ENCODE measurements at regions of chr2 and their contacts with region 1.

Region 1: DNA sequence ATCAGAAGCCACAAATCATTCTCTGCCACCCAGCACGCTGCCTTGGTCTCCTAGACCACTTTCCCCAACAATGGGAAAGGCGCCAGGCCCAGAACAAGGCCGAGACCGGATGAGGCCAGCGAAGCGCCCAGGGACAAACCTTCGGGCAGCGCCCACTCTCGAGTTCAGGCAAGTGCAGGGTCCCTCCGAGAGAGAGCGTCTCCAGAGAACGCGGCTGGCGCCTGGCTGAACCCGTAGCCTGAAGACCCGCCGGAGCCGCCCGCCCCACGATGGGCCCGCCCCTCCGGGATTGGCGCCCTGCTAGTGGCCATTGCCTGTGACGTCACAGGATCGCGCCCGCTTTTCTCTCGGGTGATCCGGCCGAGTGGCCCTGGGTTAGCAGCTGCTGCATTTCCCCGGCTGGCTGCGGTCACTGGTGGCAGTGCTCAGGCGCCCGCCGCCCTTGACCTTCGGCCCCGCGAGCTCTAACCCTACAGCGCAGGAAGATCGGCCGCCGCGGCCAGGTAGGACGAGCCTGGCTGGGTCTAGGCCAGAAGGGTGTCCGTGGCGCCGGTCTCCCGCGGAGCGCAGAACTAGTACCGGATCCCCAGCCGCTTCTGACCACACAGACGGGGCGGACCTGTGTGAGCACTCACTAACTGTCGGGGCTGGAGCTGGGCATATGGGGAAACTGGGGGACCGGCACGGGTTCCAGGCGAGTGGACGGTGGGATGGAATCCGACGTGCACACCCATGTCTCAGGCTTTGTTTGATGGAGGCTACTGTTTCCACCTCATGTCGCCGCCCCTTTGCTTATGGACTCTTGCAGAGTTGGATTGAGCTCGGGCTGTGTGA is at the start of gene FAHD2A:
- DNase-seq: peak; percentile 98
- ATAC-seq: peak; percentile 95
- H3K4me3 Mint-ChIP-seq: peak within 1 kb of the TSS; percentile 91
- H3K27ac Mint-ChIP-seq: peak within 1 kb of the TSS; percentile 95
- H3K4me1 Mint-ChIP-seq: peaks cover 16% of the 10 kb centered on the region
- H3K27me3 Mint-ChIP-seq: no peaks in the 10 kb centered on the region
- total RNA-seq, gene FAHD2A: 37.9 to 41.2 TPM

Region 2: DNA sequence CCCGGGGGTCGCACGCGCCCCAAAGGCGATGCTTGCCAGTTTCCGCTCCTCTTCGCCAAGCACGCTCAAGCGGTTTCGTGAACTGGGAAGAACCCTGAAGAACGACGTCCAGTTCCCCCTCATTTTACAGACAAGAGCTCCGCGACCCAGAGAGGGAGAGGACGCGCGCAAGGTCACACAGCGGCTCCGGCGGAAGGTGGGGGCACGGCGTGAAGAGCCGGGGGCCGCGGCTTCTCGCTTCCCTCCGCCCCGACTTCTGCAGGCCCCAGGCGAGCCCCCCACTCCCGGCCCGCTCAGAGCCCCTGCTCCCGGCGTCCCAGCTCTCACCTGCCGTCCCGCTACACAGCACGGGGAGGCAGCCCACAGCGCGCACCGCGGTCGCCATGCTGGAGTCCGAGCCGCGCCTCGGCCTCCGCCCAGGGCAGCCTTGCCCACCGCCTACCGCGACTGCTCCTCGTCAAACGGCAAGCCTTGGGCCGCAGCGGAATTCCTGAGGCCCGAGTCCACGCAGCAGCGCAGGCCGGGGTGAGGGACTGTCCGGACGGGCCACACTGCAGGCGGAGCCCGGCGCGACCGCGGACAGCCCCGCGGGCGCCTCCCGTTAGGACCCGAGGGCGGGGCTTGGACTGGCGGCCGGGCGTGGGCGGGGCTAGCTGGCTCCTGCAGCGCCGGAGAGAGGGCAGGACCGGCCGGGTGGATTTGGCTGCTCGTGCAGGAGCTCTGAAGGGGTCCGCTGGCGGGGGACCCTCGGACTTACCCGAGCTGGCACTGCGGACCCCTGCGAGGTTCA is 281.0 kb before region 1 on chr2 and contains the start of gene MRPS5:
- CTCF ChIA-PET with region 1: no interaction called
- POLR2A ChIA-PET with region 1: no interaction called
- intact Hi-C with region 1: loop called in 1 of 2 experiments (anchors 2 kb)
- DNase-seq: peak; percentile 93
- ATAC-seq: peak; percentile 89
- H3K4me3 Mint-ChIP-seq: peak within 1 kb of the TSS; percentile 97
- H3K27ac Mint-ChIP-seq: peak within 1 kb of the TSS; percentile 94
- H3K4me1 Mint-ChIP-seq: peaks cover 37% of the 10 kb centered on the region
- H3K27me3 Mint-ChIP-seq: no peaks in the 10 kb centered on the region
- total RNA-seq, gene MRPS5: 90.7 to 97.1 TPM

Region 3: DNA sequence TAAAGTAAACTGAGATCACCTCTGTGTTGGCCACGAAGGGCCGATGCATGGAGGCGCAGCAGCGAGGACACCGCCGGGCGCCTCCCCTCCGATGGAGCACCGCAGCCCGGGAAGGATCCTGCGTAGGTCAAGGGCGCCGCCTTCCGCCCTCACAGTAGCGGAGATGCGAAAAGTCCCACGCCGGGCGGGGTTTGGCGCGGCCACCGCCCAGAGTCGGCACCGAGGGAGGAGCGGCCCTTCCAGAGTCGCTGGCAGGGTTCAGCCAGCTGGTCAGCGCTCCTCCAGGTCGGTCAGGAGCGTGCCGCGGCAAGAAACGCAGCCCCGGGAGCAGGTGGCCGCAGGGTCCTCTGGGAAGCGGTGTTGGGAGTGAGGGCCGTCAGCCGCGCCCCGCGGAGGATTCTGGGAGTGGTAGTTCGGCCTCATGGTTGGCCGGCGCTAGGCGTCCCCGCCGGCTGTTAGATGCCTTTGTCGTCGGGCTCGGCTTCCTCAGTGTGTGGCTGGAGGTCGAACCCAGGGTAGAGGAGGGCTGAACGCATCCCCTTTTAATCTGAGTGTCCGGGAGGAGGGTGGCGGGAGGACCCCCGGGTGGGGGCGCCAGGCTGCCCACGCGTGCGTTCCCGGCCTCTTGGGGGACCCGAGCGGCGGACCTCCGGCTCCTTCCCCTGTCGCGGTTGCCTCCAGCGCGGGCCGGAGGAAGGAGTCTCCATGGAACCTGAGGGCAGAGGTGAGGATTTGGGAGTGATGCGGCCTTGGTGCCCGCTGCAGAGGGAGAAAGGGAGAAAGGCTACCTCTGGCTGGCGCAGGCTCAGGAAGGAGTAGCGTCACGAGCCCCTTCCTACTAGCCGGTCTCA is 195.3 kb before region 1 on chr2 and contains the start of gene ZNF892:
- CTCF ChIA-PET with region 1: no interaction called
- POLR2A ChIA-PET with region 1: no interaction called
- intact Hi-C with region 1: loop called in 1 of 2 experiments (anchors 2 kb)
- DNase-seq: peak; percentile 91
- ATAC-seq: peak; percentile 98
- H3K4me3 Mint-ChIP-seq: peak within 1 kb of the TSS; percentile 87
- H3K27ac Mint-ChIP-seq: peak within 1 kb of the TSS; percentile 68
- H3K4me1 Mint-ChIP-seq: peaks cover 17% of the 10 kb centered on the region
- H3K27me3 Mint-ChIP-seq: no peaks in the 10 kb centered on the region
- total RNA-seq, gene ZNF892: 3.2 to 3.8 TPM

Region 4: DNA sequence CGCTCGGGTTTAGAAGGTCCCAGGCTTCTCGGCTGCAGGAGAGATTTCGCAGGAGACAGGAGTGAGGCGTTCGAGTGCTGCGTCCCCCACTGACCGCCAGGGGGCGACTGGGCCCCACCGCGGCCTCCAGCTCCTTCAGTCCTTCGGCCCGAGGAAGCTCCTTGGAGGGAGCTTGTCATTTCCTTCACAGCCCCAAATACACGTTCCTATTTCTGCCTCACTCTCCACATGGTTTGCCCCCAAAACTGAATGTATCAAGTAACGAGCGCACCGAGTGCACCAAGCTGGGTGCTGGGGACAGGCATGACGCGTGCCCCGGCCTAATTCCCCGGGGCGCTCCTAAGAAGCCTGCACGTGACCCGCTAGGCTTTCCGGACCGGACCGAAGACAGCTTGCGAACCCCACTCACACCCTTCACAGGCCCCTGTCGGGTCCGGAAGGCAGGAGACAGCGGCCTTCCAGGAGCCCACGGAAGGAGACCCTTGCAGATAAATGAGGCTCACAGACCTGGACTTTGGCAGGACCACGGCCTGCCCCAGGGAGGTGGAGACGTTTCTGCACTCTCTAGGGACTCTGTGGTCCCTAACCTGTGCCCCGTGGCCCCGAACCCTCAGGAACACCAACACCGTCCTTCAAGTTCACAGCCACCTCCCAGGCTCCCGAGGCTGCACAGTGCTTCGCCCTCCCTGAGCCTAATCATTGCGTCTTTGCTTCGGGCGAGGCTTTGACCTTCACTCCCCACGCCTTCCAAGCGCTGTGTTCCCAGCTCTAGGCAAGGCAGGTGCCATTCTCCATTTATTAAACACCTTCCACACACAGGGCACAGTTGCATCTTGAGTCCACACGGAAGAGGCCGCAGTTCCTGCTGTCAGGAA is 13.1 kb before region 1 on chr2:
- CTCF ChIA-PET with region 1: interaction called, 15 read pairs
- POLR2A ChIA-PET with region 1: no interaction called
- intact Hi-C with region 1: no loop called
- DNase-seq: peak; percentile 74
- ATAC-seq: peak; percentile 96
- H3K4me3 Mint-ChIP-seq: no peak overlapping the region
- H3K27ac Mint-ChIP-seq: no peak overlapping the region
- H3K4me1 Mint-ChIP-seq: no peaks in the 10 kb centered on the region
- H3K27me3 Mint-ChIP-seq: peaks cover 2% of the 10 kb centered on the region

Region 5: DNA sequence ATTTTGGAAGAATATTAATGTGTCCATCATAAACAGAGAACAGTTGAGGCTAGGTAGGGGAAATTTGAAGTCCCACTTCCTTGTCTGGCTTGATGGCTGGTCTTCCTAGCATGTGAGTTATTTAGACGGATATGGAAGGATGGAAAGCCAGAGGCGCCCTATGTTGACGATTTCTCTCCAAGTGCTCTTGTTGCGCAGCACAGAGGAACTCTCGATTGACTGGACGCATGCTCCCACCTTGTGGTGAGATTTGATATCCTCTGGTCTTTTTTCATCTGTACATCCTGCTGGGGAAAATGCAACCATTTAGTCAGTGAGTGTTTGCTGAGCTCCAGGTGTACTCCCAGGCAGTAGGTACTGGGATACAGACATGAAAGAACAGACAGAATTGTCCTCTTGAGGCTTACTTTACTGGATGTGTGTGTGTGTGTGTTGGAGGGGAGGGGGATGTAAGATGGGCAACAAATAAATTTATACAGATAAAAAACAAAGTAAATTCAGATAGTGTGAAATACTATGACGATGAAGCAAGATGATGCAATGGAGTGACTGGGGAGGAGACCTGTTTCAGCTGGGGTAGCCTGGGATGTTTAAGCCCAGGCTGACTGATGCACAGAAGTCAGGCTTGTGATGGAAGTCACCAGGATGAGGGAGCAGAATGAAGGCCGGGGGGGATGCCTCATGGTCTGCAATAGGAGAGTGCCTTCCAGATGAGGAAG is 326.4 kb after region 1 on chr2:
- CTCF ChIA-PET with region 1: no interaction called
- POLR2A ChIA-PET with region 1: no interaction called
- intact Hi-C with region 1: loop called in 1 of 2 experiments (anchors 5 kb)
- DNase-seq: peak; percentile 61
- ATAC-seq: peak; percentile 63
- H3K4me3 Mint-ChIP-seq: no peak overlapping the region
- H3K27ac Mint-ChIP-seq: no peak overlapping the region
- H3K4me1 Mint-ChIP-seq: no peaks in the 10 kb centered on the region
- H3K27me3 Mint-ChIP-seq: peaks cover 3% of the 10 kb centered on the region